Naive thymus-derived CD8-positive, alpha-beta T cell (primary cell): ENCODE measurements at regions of chr11 and their contacts with region 1.

Region 1: DNA sequence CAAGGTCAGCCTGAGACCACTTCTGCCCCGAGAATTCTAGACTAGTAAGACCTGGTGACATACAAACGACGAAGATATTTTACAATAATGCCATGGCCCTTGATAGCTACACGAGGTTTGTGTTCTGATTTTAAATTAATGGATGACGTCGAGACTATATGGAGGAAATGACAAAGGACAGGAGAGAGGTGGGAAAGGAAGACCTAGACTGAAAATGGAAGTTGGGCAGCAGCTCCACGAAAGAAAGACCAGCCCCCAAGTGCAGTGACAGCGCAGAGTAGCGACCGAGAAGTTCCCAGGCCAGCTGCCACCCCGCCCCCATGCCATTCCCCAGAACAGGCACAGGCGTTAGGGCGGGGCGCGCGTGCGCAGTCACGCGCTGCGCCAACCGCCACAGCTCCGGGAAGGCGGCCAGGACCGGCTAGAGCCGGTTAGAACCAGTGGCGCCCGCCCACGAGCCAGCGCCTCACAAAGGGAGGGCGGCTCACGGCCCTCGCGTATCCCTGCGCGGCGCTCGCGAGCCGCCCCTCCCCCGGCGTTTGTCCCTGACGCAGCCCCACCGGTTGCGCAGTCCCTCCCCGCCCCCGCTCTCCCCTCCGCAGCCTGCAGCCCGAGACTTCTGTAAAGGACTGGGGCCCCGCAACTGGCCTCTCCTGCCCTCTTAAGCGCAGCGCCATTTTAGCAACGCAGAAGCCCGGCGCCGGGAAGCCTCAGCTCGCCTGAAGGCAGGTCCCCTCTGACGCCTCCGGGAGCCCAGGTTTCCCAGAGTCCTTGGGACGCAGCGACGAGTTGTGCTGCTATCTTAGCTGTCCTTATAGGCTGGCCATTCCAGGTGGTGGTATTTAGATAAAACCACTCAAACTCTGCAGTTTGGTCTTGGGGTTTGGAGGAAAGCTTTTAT is 1.5 kb upstream of the MALAT1 start:
- DNase-seq: peak; percentile 96 to 99 (median 98)
- ATAC-seq: peak; percentile 77 to 80
- H3K4me3 Mint-ChIP-seq: no peak overlapping the region
- H3K27ac Mint-ChIP-seq: no peak overlapping the region
- H3K4me1 Mint-ChIP-seq: peaks cover 16 to 31% (median 24%) of the 10 kb centered on the region in 4 donors
- H3K27me3 Mint-ChIP-seq: no peaks in the 10 kb centered on the region

Region 2: DNA sequence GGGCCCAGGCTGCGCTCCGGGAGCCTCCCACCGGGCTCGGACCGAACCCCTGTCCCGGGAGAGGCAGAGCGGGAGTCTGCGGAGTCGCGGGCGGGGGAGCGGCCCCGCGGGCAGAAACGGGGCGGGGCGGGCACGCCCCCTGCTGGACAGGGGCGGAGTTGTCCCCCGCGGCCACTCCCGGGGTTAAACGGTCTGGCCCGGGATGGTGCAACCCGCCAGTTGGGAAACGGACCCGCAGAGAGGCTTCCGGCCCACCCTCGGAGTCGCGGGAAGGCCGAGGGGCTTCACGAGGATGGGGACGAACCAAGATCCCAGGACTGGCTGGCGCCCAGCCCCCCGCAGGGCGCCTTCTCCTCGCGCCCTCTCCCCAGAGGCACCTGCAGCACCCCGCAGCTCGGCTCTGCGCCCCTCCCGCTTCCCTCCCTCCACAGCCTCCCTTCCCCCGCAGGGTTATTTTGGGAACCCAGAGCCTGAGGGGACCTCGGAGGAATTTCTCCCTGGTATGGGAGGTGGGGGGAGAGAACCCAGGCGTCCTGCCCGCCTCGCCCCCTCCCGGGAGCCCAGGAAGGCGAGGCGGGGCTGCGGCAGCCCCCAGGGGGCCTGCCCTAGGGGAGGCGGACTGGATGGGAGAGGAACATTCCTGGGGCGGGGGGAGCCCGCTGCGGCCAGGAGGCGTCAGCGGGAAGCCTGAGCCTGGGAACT is 754.4 kb before region 1 on chr11:
- POLR2A ChIA-PET with region 1: interaction called, 11 read pairs
- DNase-seq: peak; percentile 57 to 91 (median 78)
- ATAC-seq: peak; percentile 7 to 11
- H3K4me3 Mint-ChIP-seq: peak overlapping the region in 8 of 10 donors; percentile 89 to 100 (median 99)
- H3K27ac Mint-ChIP-seq: peak overlapping the region in 7 of 10 donors; percentile 90 to 99 (median 98)
- H3K4me1 Mint-ChIP-seq: peaks cover 29 to 54% (median 44%) of the 10 kb centered on the region in 4 donors
- H3K27me3 Mint-ChIP-seq: peaks cover 0 to 2% (median 0%) of the 10 kb centered on the region in 5 donors

Region 3: DNA sequence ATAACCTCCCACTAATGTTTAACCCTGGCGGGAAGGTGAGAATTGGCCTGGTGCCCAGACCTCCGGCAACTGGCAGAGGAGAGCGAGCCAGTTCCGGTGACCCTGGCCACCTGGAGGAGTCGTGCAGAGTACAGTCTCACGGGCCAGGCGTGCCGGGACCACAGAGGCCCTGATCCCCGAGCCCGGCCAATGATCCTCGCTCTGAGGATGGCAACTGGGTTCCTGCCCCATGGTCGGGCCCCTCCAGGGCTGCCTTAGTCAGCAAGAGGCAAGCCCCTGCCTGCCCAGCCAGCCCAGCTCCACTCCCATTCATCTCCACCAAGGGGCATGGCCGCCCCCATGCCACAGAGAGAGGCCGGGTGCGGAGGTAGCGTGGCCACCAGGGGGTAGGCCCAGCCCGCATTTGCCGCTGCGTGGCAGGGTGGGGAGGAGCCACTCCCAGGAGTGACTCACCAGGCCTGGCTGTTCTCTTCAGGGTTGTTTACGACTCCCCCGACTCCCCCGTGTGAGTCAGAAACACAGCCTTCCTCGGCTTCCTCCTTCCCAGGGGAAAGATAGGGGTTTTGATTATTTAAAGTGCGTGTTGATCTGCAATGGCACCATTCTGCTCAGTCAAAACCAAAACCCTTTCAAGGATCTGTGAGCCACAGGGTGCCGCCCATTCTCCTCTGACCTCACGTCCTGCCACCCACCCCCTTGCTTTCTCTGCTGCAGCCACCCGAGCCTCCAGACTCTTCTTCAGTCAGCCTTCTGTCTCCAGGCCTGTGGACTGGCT is 115.2 kb before region 1 on chr11 and contains the start of gene SLC25A45:
- POLR2A ChIA-PET with region 1: interaction called, 396 read pairs
- DNase-seq: peak; percentile 84 to 96 (median 91)
- ATAC-seq: peak; percentile 86 to 88
- H3K4me3 Mint-ChIP-seq: peak within 1 kb of the TSS; percentile 80 to 97 (median 92)
- H3K27ac Mint-ChIP-seq: peak within 1 kb of the TSS; percentile 96 to 100 (median 99)
- H3K4me1 Mint-ChIP-seq: peaks cover 34 to 72% (median 57%) of the 10 kb centered on the region in 4 donors
- H3K27me3 Mint-ChIP-seq: no peaks in the 10 kb centered on the region
- polyA plus RNA-seq, gene SLC25A45: 10.8 to 19.2 (median 11.0) TPM

Region 4: GRCh38 chr11:65440831-65441499 is 56.4 kb before region 1 on chr11:
- POLR2A ChIA-PET with region 1: interaction called, 20 read pairs
- DNase-seq: no peak
- ATAC-seq: no peak
- H3K4me3 Mint-ChIP-seq: peak overlapping the region in 9 of 10 donors; percentile 1 to 73 (median 49)
- H3K27ac Mint-ChIP-seq: peak overlapping the region in 8 of 10 donors; percentile 25 to 90 (median 82)
- H3K4me1 Mint-ChIP-seq: peaks cover 21 to 79% (median 58%) of the 10 kb centered on the region in 4 donors
- H3K27me3 Mint-ChIP-seq: no peaks in the 10 kb centered on the region

Region 5: GRCh38 chr11:65516135-65516935 is 18.9 kb after region 1 on chr11:
- POLR2A ChIA-PET with region 1: interaction called, 302 read pairs
- DNase-seq: no peak
- ATAC-seq: peak; percentile 29 to 58
- H3K4me3 Mint-ChIP-seq: peak overlapping the region in 1 of 10 donors; percentile 75
- H3K27ac Mint-ChIP-seq: peak overlapping the region; percentile 31 to 91 (median 64)
- H3K4me1 Mint-ChIP-seq: peaks cover 0 to 11% (median 10%) of the 10 kb centered on the region in 4 donors
- H3K27me3 Mint-ChIP-seq: peaks cover 0 to 1% (median 0%) of the 10 kb centered on the region in 5 donors

Region 6: GRCh38 chr11:65551572-65552398 is 54.4 kb after region 1 on chr11:
- POLR2A ChIA-PET with region 1: interaction called, 29 read pairs
- DNase-seq: peak in 7 of 10 donors; percentile 33 to 77 (median 49)
- ATAC-seq: peak; percentile 25 to 30
- H3K4me3 Mint-ChIP-seq: peak overlapping the region; percentile 16 to 91 (median 63)
- H3K27ac Mint-ChIP-seq: peak overlapping the region; percentile 61 to 93 (median 82)
- H3K4me1 Mint-ChIP-seq: peaks cover 51 to 77% (median 75%) of the 10 kb centered on the region in 4 donors
- H3K27me3 Mint-ChIP-seq: no peaks in the 10 kb centered on the region

Region 7: DNA sequence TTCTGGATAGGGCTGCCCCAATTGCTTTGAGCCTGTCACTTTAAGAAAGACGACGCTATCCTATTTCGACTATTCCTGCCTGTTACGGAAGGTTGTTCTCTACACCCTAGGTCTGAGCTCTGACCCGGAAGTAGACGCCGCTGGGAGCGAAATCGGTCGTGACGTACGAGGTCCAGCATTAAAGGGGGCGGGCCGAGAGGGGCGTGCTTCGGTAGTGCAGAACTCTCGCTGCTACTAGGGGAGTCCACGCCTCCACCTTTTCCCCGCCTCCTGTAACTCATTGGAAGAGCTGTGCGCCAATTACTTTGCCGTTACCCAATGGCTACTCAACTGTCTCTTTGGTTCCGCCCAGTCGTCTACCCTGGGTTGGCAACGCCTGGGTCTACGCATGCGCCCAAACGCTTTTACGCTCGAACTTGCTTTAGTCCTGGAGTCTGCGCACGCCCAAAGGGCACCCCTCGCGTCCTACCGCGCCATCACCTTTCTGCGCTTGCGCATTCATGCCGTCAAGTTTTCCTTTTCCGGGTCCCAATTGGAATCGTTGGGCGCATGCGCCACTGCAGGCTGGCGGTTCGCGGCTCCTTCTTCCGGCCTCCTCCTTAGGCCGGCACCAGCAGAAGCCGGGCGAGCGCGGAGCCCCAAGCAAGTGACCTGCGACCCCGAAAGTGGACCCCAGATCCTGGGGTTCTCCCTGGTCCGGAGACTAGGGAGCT is 118.0 kb after region 1 on chr11 and contains the start of gene PCNX3:
- POLR2A ChIA-PET with region 1: interaction called, 24 read pairs
- DNase-seq: peak; percentile 97 to 100 (median 100)
- ATAC-seq: peak; percentile 86 to 89
- H3K4me3 Mint-ChIP-seq: peak within 1 kb of the TSS; percentile 94 to 99 (median 96)
- H3K27ac Mint-ChIP-seq: peak within 1 kb of the TSS; percentile 94 to 99 (median 97)
- H3K4me1 Mint-ChIP-seq: peaks cover 22 to 55% (median 52%) of the 10 kb centered on the region in 4 donors
- H3K27me3 Mint-ChIP-seq: peaks cover 0 to 2% (median 0%) of the 10 kb centered on the region in 5 donors
- polyA plus RNA-seq, gene PCNX3: 0.96 to 6.5 (median 2.2) TPM

Region 8: GRCh38 chr11:65850831-65851811 is 353.7 kb after region 1 on chr11:
- POLR2A ChIA-PET with region 1: no interaction called
- DNase-seq: no peak
- ATAC-seq: peak in 1 of 2 donors; percentile 15
- H3K4me3 Mint-ChIP-seq: no peak overlapping the region
- H3K27ac Mint-ChIP-seq: peak overlapping the region in 3 of 10 donors; percentile 36 to 65 (median 40)
- H3K4me1 Mint-ChIP-seq: peaks cover 6 to 38% (median 29%) of the 10 kb centered on the region in 4 donors
- H3K27me3 Mint-ChIP-seq: no peaks in the 10 kb centered on the region